Heart left ventricle (tissue), 16 donors: ENCODE measurements at regions of chr3 and their contacts with region 1.

Region 1: GRCh38 chr3:14371573-14372474 is 30.6 kb upstream of the SLC6A6 start:
- DNase-seq: peak; percentile 86 to 94 (median 89)
- ATAC-seq: peak; percentile 73 to 87 (median 82)
- H3K4me3 ChIP-seq: no peak overlapping the region
- H3K27ac ChIP-seq: peak overlapping the region in 11 of 12 donors; percentile 11 to 87 (median 64)
- H3K4me1 ChIP-seq: peaks cover 6 to 69% (median 43%) of the 10 kb centered on the region in 12 donors
- H3K27me3 ChIP-seq: peaks cover 0 to 13% (median 0%) of the 10 kb centered on the region in 9 donors
- CTCF ChIP-seq: peak in 3 of 12 donors; percentile 7 to 19 (median 17)
- POLR2A ChIP-seq: peak in 1 of 2 donors; percentile 14

Region 2: DNA sequence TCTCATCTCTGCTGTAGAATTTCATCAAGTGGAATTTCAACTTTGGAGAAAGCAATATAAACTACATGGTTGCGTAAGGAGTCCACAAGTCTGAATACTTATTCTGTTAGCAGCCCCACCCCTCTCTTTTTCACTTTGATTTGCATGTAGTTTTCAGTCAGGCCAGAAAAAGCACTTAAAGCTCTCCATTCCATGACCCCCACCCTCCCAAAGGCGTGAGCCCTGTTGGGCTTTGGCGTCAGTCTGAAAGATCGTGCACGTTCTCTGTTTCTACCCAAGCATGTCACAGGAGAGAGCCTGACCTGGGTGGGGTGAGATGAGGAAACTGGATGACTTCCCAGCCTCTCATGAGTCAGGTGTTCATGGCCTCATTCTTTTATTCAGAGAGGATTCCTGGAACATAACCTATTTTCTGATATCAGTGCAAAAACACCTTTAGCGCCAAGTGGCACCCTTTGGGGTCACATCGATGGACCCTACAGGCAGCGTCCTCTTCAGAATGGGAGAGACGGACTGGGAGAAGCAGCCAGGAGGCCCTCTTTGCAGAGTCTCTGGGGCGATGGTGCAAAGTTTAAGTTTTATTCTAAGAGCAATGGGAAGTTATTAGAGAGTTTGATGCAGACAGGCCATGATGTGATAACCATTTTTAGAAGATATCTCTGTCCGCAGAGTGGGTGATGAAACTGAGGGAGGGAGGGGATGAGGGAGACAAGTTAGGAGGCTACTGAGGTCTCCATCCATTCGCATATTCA is 137.4 kb before region 1 on chr3:
- intact Hi-C with region 1: loop called in 1 of 10 experiments (anchors 10 kb)
- DNase-seq: peak in 4 of 5 donors; percentile 33 to 61 (median 53)
- ATAC-seq: peak; percentile 17 to 65 (median 57)
- H3K4me3 ChIP-seq: no peak overlapping the region
- H3K27ac ChIP-seq: peak overlapping the region in 10 of 12 donors; percentile 39 to 95 (median 80)
- H3K4me1 ChIP-seq: peaks cover 0 to 57% (median 29%) of the 10 kb centered on the region in 12 donors
- H3K27me3 ChIP-seq: peaks cover 0 to 5% (median 0%) of the 10 kb centered on the region in 9 donors
- CTCF ChIP-seq: no peak
- POLR2A ChIP-seq: no peak

Region 3: GRCh38 chr3:14319654-14320182 is 52.1 kb before region 1 on chr3:
- intact Hi-C with region 1: no loop called
- DNase-seq: peak in 1 of 5 donors; percentile 31
- ATAC-seq: peak in 3 of 4 donors; percentile 57 to 60 (median 59)
- H3K4me3 ChIP-seq: no peak overlapping the region
- H3K27ac ChIP-seq: no peak overlapping the region
- H3K4me1 ChIP-seq: peaks cover 0 to 24% (median 4%) of the 10 kb centered on the region in 12 donors
- H3K27me3 ChIP-seq: peaks cover 0 to 27% (median 5%) of the 10 kb centered on the region in 9 donors
- CTCF ChIP-seq: no peak
- POLR2A ChIP-seq: no peak

Region 4: DNA sequence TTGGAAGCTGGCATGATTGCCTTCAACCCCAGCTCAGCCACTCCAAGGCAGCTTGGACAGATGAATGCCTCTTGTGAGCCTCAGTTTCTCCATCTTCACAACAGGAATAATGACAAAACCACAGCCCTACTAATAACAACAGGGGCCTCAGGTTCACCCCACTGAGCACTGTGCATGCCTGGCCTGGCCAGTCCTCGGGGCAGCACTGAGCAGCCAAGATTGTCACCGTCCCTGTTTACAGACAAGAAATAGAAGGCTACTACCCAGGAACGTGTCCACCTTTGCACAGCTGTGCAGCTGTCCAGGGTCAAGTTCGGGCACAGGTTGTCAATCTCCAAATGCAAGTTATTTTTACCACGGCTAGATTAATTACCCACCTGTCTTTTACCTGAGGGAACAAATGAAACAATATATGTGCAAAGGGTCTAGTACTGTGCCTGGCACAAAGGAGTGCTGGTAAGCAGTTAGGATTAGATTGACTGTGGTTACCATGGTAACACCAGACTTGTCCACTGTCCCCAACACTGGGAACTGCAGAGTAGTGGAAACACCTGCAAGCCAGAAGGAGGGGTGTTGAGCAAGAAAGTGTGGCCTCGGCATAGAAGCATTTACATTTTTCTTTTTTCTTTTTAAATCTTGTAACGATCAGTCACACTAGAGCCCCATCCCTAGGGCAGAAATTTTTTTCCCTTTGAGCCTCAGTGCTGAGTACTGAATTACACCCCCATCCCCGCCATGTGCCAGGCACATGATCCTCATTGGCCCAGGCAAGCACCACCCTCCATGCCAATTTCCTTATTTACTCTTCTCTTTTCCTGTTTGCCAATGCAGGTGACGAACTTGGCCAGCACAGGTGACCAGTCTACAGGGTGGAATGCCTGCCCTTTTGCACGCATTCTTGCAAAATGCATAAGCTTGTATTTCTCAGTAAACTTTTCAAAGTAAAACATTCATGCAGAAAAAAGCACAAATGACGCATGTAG is 35.8 kb before region 1 on chr3:
- intact Hi-C with region 1: no loop called
- DNase-seq: no peak
- ATAC-seq: no peak
- H3K4me3 ChIP-seq: no peak overlapping the region
- H3K27ac ChIP-seq: no peak overlapping the region
- H3K4me1 ChIP-seq: peaks cover 0 to 2% (median 0%) of the 10 kb centered on the region in 12 donors
- H3K27me3 ChIP-seq: peaks cover 0 to 24% (median 2%) of the 10 kb centered on the region in 9 donors
- CTCF ChIP-seq: no peak
- POLR2A ChIP-seq: no peak

Region 5: DNA sequence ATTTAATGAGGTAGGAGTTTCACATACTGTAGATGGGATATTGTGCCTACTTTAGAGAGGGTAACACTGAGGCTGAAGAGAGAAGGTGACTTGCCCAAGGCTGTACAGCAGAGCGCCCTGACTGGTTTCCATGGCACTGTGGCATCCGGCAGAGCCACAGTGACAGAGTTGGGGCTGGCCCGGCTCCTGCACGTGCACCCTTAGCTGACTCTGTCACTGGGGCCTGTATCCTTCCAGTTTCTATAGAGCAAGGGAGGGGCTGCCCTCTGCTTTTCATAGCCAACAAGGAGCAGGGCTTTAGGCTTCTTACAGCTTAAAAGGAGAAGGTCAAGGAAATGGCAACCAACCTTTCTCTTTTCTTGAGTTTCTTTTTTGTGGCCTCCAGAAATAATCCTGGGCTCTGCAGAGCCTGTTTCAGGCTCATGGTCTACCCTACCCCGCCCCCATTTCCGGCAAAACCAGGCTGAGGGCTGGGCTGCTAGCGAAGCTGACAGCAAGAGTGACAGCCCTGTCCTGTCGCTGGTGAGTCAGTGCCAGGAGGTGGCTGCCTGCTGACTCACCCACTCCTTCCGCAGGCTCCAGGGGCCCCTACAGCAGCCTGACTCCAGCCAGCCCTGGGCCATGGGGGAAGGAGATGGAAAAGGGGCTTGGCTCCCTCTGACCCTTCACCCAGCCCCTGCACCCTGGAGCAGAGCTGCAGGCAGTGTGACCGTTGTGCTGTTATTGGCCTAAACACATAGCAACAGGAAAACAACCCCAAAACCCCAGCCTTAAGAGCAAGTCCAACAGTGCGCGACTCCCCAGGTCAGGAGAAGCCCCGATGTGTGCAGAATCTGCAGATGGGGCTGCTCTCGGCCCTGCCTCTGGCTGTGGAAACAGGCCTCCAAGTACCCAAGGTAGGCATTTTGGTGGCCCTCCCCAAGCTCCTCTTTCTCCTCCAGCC is 60.3 kb after region 1 on chr3:
- intact Hi-C with region 1: loop called in 1 of 10 experiments (anchors 5 kb)
- DNase-seq: peak; percentile 85 to 95 (median 89)
- ATAC-seq: peak; percentile 80 to 88 (median 85)
- H3K4me3 ChIP-seq: peak overlapping the region in 2 of 12 donors; percentile 2 to 36
- H3K27ac ChIP-seq: peak overlapping the region; percentile 1 to 97 (median 65)
- H3K4me1 ChIP-seq: peaks cover 14 to 100% (median 67%) of the 10 kb centered on the region in 12 donors
- H3K27me3 ChIP-seq: no peaks in the 10 kb centered on the region
- CTCF ChIP-seq: no peak
- POLR2A ChIP-seq: no peak